ENCODE measurements at regions of chr9 and their contacts with region 1.

Region 1: GRCh38 chr9:133935328-133936040 is 56.6 kb downstream of the VAV2 start:
- DNase-seq: peak; percentile 90

Region 2: GRCh38 chr9:133233681-133234432 is 701.6 kb before region 1 on chr9:
- intact Hi-C with region 1: loop called in 1 of 2 experiments (anchors 5 kb)
- DNase-seq: no peak

Region 3: GRCh38 chr9:134325817-134326723 is 390.6 kb after region 1 on chr9 and contains the start of gene RXRA:
- intact Hi-C with region 1: no loop called
- DNase-seq: peak; percentile 94
- total RNA-seq, gene RXRA: 41.5 to 44.7 TPM

Region 4: GRCh38 chr9:135077497-135078200 is 1142.2 kb after region 1 on chr9:
- intact Hi-C with region 1: no loop called
- DNase-seq: peak; percentile 79

Measured in posterior vena cava (tissue), 2 donors.